Endothelial cell of umbilical vein (primary cell): ENCODE measurements at regions of chr15 and their contacts with region 1.

Region 1: DNA sequence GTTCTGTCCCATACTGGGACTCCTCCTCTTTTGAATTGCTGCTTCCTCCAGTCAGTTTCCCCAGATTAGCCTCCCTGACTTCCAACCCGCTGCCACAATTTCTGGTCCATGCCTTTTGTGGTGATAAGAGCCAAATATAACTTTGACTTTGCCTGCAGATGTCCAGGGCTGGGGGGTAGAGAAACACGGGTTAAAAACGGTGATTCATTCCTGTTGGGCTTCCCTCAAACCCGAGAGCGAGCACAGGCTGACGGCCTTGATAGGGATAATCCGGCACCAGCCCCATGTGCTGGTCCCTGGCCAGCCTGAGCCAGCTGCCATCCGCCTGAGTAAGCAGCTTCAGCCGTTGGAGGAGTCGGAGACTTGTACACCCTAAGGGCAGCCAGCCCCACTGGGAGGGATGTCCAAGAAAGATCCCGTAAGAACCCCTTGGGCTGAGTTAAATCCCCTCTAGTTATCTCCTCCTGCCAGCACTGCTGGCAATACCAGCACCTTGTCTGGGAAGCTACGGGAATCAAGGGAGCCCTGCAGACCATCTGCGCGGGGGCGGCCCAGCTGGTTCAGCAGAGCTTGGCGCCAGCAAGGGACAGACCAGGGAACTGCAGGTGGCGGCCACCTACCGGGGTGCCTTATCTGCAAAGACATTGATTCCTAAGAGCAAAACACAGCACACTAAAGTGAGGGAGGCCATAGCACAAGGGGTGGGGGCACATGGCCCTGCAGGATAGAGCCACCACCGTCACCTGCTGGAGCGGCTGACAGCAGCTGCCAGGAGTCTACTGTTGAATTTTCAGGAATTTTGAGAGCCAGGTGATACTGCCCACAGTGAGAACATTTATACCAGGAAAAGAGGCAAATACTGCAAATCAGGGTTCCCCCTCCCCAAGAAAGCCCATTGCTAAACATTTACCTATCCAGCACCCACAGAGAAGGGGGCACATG is 18.1 kb downstream of the CSPG4 start:
- DNase-seq: peak; percentile 81
- H3K4me3 ChIP-seq: no peak overlapping the region
- H3K27ac ChIP-seq: no peak overlapping the region
- H3K4me1 ChIP-seq: peaks cover 16% of the 10 kb centered on the region
- H3K27me3 ChIP-seq: peaks cover 42 to 48% of the 10 kb centered on the region in 2 experiments
- CTCF ChIP-seq: peak in 1 of 2 donors; percentile 14
- POLR2A ChIP-seq: no peak

Region 2: GRCh38 chr15:75705853-75706681 is 11.6 kb after region 1 on chr15:
- CTCF ChIA-PET with region 1: no interaction called
- POLR2A ChIA-PET with region 1: no interaction called
- dilution Hi-C with region 1: no loop called
- intact Hi-C with region 1: no loop called
- DNase-seq: no peak
- H3K4me3 ChIP-seq: no peak overlapping the region
- H3K27ac ChIP-seq: no peak overlapping the region
- H3K4me1 ChIP-seq: no peaks in the 10 kb centered on the region
- H3K27me3 ChIP-seq: peaks cover 6 to 11% of the 10 kb centered on the region in 2 experiments
- CTCF ChIP-seq: no peak
- POLR2A ChIP-seq: no peak

Region 3: DNA sequence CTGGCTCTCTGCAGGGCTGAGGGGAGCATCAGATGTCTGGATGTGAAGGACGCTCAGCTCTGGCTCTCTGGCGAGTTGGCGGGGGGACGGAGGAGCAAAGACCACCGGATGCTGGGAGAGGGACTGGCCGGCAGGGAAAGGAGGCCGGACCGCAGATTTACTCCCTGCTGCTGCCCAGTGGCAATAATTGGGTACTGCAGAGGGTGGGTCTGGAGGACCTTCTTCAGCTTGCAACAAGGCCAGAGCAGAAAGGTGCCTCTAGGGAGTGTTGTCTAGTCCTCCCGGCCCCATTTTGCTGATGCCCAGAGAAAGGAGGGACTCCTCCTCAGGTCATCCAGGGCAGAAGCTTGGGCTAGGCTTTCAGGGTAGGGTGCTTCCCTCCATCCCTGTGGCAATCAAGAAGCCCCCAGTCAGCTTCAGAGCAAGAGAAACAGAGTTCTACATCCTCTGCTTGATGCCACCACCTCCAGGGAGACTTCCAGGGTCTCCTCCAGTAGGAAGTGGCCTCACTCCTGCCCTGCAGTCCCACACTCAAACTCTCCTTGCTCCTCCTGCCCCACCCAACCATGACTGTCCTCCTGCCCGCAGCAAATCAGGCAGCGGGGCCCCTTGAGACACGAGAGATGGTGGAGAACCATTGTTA is 38.4 kb after region 1 on chr15:
- CTCF ChIA-PET with region 1: interaction called, 9 read pairs
- POLR2A ChIA-PET with region 1: no interaction called
- dilution Hi-C with region 1: no loop called
- intact Hi-C with region 1: loop called (anchors 2 kb)
- DNase-seq: peak; percentile 62
- H3K4me3 ChIP-seq: no peak overlapping the region
- H3K27ac ChIP-seq: no peak overlapping the region
- H3K4me1 ChIP-seq: peaks cover under 1% of the 10 kb centered on the region
- H3K27me3 ChIP-seq: peaks cover 0 to 7% of the 10 kb centered on the region in 2 experiments
- CTCF ChIP-seq: peak; percentile 67 to 85
- POLR2A ChIP-seq: no peak

Region 4: DNA sequence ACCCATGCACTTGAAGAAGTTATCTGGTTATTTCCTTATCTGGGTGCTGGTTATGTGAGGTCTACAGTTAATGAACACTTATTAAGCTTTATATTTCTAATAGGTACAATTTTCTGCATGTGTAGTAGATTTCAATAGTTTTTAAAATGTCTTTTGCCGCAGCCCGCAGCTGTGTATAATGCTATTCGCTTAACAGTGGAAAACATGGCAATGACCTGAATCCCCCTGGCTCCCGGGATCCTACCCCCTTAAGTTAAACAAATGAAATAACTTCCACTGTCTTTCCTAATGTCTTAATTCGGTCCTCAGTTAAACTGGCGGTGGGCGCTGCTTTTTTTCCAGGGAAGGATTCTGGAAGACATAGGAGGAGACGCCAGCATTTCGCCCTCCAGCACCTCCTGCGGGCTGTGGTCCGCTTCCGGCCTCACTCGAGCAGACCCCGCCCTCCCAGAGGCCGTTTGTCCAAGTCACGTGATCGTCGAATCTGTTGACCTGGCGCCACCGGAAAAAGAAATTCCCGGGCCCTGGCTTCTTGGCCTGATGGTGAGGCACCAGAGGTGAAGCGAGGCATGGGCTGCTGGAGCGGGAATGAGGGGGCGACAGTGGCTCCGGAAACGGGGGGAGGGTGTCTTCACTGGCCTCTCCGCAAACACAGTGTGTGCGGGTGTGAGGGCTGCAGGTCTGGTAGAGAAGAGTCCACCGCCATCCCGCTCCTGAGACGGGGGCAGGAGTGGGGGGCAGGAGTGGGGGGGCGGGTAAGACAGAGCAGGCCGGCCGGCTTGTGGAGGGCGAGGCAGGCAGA is 63.8 kb after region 1 on chr15:
- CTCF ChIA-PET with region 1: no interaction called
- POLR2A ChIA-PET with region 1: no interaction called
- dilution Hi-C with region 1: no loop called
- intact Hi-C with region 1: no loop called
- DNase-seq: peak; percentile 54
- H3K4me3 ChIP-seq: peak overlapping the region; percentile 25 to 54 (median 36)
- H3K27ac ChIP-seq: no peak overlapping the region
- H3K4me1 ChIP-seq: peaks cover 4% of the 10 kb centered on the region
- H3K27me3 ChIP-seq: peaks cover 0 to 1% of the 10 kb centered on the region in 2 experiments
- CTCF ChIP-seq: peak in 1 of 2 donors; percentile 35
- POLR2A ChIP-seq: no peak

Region 5: DNA sequence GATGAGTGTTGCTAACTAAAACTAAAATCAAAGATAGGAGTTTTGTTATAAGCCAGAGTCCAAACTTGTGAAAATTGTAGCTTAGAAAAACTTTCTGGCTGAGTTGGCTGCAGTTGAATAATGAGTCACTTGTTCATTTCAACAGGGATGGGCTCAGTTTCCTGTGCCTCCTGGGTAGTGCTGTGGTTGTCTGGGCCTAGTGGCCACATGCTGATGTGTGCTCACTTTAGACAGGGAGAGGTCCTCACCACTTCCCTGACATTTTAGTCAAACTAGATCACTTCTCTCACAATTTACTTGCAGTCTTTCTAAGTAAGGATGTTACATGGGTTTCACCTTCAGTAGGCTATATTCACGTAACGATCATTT is 142.4 kb after region 1 on chr15:
- CTCF ChIA-PET with region 1: no interaction called
- POLR2A ChIA-PET with region 1: no interaction called
- dilution Hi-C with region 1: no loop called
- intact Hi-C with region 1: no loop called
- DNase-seq: peak; percentile 42
- H3K4me3 ChIP-seq: no peak overlapping the region
- H3K27ac ChIP-seq: no peak overlapping the region
- H3K4me1 ChIP-seq: peaks cover 10% of the 10 kb centered on the region
- H3K27me3 ChIP-seq: no peaks in the 10 kb centered on the region
- CTCF ChIP-seq: no peak
- POLR2A ChIP-seq: no peak

Region 6: DNA sequence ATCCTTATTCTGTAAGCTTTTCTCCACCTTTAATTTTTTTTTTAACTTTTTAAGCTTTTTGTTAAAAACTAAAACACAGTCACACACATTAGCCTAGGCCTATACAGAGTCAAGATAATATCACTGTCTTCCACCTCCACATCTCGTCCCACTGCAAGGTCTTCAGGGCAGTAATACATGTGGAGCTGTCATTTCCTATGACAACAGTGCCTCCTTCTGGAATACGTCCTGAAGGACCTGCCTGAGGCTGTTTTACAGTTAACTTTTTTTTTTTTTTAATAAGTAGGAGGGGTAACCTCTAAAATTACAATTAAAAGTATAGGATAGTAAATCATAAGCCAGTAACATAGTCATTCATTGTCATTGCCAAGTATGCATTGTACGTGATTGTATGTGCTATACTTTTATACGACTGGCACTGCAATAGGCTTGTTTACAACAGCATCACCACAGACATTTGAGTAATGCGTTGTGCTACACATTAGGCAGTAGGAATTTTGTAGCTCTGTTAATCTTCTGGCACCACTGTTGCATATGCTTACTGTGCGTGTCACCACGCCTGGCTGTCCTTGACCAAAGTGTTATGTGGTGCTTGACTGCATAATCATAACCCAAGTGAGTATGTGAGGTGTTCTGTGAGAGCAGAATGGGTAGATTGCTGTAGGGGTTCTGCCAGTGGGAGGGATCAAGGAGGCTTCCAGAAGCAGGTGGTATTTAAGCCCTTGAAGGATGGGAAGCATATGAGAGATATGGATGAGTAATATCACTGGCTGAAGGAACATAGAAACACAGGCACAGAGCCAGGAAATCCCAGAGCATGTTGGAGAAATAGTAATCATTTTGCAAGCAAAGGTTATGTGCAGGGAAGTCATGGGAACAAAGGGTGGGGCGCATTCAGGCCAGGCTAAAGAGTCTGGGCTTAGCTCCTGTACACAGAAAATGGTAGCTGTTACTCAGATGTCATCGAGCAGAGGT is 227.5 kb after region 1 on chr15:
- CTCF ChIA-PET with region 1: interaction called, 6 read pairs
- POLR2A ChIA-PET with region 1: no interaction called
- dilution Hi-C with region 1: no loop called
- intact Hi-C with region 1: loop called (anchors 5 kb)
- DNase-seq: peak; percentile 77
- H3K4me3 ChIP-seq: no peak overlapping the region
- H3K27ac ChIP-seq: no peak overlapping the region
- H3K4me1 ChIP-seq: peaks cover 12% of the 10 kb centered on the region
- H3K27me3 ChIP-seq: no peaks in the 10 kb centered on the region
- CTCF ChIP-seq: peak; percentile 34 to 44
- POLR2A ChIP-seq: no peak